ENCODE measurements at regions of chr7 and their contacts with region 1.

Region 1: GRCh38 chr7:37181550-37181932 is 267.1 kb downstream of the ELMO1 start:
- DNase-seq: no peak
- H3K4me3 ChIP-seq: no peak overlapping the region
- H3K27ac ChIP-seq: no peak overlapping the region
- H3K4me1 ChIP-seq: no peaks in the 10 kb centered on the region
- H3K27me3 ChIP-seq: no peaks in the 10 kb centered on the region
- CTCF ChIP-seq: no peak

Region 2: DNA sequence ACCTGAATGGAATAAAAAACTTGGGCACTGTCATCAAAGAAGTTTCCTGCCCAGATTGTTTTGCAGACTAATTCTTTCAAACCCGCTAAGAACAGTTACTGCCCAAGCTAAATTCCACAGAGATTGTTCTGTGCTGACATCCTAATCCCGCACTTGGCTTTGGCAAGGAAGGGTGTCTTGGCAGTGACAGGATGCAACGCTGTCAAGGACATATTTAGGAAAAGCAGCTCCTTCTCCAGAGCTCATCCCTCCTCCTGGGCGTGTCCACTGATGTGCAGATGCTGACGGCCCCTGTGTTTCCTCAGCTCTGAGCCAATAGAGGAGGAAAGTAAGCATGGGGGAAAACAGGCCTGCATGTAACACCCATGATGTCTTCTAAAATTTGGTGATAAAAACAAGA is 954.3 kb before region 1 on chr7:
- CTCF ChIA-PET with region 1: no interaction called
- dilution Hi-C with region 1: no loop called
- in situ Hi-C with region 1: no loop called
- intact Hi-C with region 1: no loop called
- DNase-seq: no peak
- H3K4me3 ChIP-seq: no peak overlapping the region
- H3K27ac ChIP-seq: no peak overlapping the region
- H3K4me1 ChIP-seq: no peaks in the 10 kb centered on the region
- H3K27me3 ChIP-seq: no peaks in the 10 kb centered on the region
- CTCF ChIP-seq: no peak

Region 3: DNA sequence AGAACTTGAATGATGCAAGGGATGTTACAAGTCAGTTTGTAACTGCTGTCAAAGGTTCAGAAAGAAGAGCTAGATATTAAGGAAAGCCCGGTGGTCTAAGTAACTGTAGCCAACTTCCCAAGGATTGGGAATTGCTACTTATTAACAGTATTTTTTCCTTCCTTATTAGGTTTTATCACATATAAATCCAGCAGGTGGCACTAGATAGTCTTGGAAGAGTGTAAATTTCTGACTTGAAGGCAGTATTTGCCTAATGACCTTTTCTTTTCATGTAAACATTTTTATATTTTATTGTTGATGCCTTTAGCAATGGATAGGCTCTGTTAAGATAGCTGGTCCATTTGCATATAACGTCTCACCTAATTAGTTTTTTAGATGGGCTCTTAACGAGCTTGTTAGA is 740.7 kb before region 1 on chr7:
- CTCF ChIA-PET with region 1: interaction called, 4 read pairs
- dilution Hi-C with region 1: no loop called
- in situ Hi-C with region 1: no loop called
- intact Hi-C with region 1: loop called (anchors 5 kb)
- DNase-seq: peak; percentile 6
- H3K4me3 ChIP-seq: no peak overlapping the region
- H3K27ac ChIP-seq: no peak overlapping the region
- H3K4me1 ChIP-seq: no peaks in the 10 kb centered on the region
- H3K27me3 ChIP-seq: no peaks in the 10 kb centered on the region
- CTCF ChIP-seq: peak; percentile 45 to 50

Region 4: DNA sequence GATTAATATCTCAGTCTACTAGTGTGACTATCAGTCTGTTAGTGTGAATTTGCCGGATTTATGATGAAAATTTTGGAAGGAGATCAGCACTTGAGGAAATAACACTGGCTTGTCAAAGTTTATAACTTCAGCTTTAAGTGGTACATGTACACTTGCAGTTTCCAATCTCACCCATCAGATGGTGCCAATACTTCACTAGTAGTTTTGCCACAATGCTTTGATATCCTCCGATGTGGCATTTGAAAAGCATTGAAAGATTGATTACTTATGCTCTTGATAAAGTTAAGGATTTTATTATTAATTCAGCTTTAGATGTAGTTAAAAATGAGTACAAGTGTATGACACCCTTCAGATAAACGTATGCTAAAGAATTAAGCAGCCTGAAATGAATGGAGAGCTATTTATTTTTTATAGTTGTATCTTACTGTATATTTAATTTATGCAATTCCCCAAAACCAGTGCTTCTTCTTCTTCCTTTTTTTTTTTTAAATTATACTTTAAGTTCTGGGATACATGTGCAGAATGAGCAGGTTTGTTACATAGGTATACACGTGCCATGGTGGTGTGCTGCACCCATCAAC is 693.7 kb before region 1 on chr7:
- CTCF ChIA-PET with region 1: interaction called, 4 read pairs
- dilution Hi-C with region 1: no loop called
- in situ Hi-C with region 1: loop called (anchors 10 kb)
- intact Hi-C with region 1: loop called (anchors 1 kb)
- DNase-seq: peak; percentile 60
- H3K4me3 ChIP-seq: no peak overlapping the region
- H3K27ac ChIP-seq: no peak overlapping the region
- H3K4me1 ChIP-seq: no peaks in the 10 kb centered on the region
- H3K27me3 ChIP-seq: no peaks in the 10 kb centered on the region
- CTCF ChIP-seq: peak; percentile 84 to 85

Region 5: GRCh38 chr7:36686499-36686898 is 495.0 kb before region 1 on chr7:
- CTCF ChIA-PET with region 1: no interaction called
- dilution Hi-C with region 1: no loop called
- in situ Hi-C with region 1: no loop called
- intact Hi-C with region 1: loop called (anchors 2 kb)
- DNase-seq: peak; percentile 91
- H3K4me3 ChIP-seq: no peak overlapping the region
- H3K27ac ChIP-seq: peak overlapping the region; percentile 72
- H3K4me1 ChIP-seq: peaks cover 53% of the 10 kb centered on the region
- H3K27me3 ChIP-seq: no peaks in the 10 kb centered on the region
- CTCF ChIP-seq: no peak

Region 6: GRCh38 chr7:36967387-36967786 is 214.2 kb before region 1 on chr7:
- CTCF ChIA-PET with region 1: no interaction called
- dilution Hi-C with region 1: no loop called
- in situ Hi-C with region 1: no loop called
- intact Hi-C with region 1: loop called (anchors 1 kb)
- DNase-seq: peak; percentile 52
- H3K4me3 ChIP-seq: no peak overlapping the region
- H3K27ac ChIP-seq: no peak overlapping the region
- H3K4me1 ChIP-seq: no peaks in the 10 kb centered on the region
- H3K27me3 ChIP-seq: no peaks in the 10 kb centered on the region
- CTCF ChIP-seq: peak; percentile 74 to 78

Region 7: DNA sequence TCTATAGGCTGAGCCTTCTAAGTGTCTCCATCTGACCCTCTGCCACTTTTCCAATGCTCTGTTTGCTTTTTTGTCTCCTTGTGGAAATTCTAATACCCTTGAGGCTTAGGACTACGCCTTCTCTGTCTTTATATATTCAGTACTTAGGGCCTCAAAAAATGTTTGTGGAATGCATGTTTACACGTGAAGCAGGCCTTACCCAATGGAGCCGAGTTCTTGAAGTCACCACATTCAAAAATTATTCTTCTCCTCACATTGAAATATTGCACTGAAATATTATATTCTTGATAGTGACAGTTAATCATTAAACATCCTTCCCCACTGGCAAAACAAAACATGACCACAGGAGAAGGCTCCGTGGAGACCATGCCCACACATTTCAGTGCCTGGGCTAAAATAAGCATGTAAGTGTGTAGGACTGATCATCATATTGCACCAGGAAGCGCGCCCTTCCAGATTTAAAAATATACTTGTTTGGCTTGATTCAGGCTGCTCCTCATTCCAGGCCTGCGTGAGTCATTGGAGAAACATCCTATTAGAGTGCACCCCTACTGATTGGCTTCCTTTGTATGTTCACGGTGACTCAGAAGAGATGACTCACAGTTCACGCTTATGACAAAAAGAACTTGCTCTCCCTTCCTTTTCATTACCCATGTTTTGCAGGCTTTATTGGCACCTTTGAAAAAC is 149.8 kb before region 1 on chr7:
- CTCF ChIA-PET with region 1: interaction called, 7 read pairs
- dilution Hi-C with region 1: no loop called
- in situ Hi-C with region 1: no loop called
- intact Hi-C with region 1: loop called (anchors 2 kb)
- DNase-seq: peak; percentile 97
- H3K4me3 ChIP-seq: no peak overlapping the region
- H3K27ac ChIP-seq: peak overlapping the region; percentile 66
- H3K4me1 ChIP-seq: peaks cover 23% of the 10 kb centered on the region
- H3K27me3 ChIP-seq: no peaks in the 10 kb centered on the region
- CTCF ChIP-seq: no peak

Region 8: DNA sequence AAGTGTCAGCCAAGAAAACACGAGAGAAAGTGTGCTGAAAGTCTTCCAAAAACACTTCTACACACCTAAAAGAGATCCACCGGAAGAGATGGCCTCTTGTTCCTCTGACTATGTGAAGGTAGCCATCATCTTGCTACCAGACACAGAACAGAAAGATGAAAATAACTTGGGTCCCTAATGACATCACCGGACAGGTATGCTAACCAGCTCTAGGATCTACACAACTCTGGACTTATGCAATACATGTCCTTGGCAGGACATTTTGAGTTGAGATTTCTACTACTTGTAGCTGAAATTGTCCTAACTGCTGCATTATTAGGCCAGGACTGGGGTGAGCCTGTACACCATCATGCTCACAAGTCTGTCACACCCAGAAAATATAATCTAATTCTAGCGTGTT is 91.6 kb before region 1 on chr7:
- CTCF ChIA-PET with region 1: no interaction called
- dilution Hi-C with region 1: no loop called
- in situ Hi-C with region 1: no loop called
- intact Hi-C with region 1: no loop called
- DNase-seq: peak; percentile 28
- H3K4me3 ChIP-seq: no peak overlapping the region
- H3K27ac ChIP-seq: no peak overlapping the region
- H3K4me1 ChIP-seq: no peaks in the 10 kb centered on the region
- H3K27me3 ChIP-seq: peaks cover 2% of the 10 kb centered on the region
- CTCF ChIP-seq: no peak